ENCODE measurements at regions of chrX and their contacts with region 1.

Region 1: DNA sequence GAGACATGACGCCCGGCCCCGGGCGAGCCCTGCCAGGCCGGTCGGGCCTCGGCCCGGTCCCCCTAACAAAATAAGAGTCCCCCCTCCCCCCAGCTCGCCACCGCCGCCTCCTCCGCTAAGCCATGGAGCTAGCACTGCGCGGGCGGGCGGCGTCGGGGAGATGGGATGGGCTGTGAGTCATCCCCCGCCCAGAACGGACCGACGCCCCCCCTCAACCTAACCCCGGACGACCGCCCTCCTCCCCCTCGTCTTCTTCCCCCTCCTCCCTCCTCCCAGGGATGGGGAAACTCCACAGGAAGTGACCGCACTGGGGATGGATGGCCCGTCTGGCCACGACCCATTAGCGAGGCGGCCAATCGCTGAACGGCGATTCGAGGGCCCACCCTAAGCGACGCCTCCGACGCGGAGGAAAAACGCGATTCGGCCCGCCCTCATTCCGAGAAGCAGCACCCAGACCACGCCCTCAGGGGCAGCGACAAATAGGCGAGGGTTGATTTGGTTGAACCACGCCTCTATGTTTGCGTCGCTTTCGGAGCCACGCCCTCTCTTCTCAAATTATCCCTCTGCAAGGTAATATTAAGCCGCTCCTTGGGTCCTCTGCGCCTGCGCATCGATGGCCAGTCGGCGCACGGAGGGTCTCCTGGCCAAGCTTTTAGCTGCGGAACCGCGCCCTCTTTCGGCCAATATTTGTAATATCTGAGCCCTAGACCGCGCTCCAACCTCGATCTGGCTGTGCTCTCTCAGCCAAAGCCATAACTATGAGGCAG is at the start of gene TFE3:
- DNase-seq: peak; percentile 98
- H3K4me3 Mint-ChIP-seq: peak within 1 kb of the TSS; percentile 79
- H3K27ac Mint-ChIP-seq: peak within 1 kb of the TSS; percentile 91
- H3K4me1 Mint-ChIP-seq: peaks cover 8% of the 10 kb centered on the region
- H3K27me3 Mint-ChIP-seq: no peaks in the 10 kb centered on the region
- CTCF ChIP-seq: peak; percentile 37
- total RNA-seq, gene TFE3: 45.3 and 71.7 TPM in 2 replicates

Region 2: GRCh38 chrX:48917139-48918001 is 126.0 kb before region 1 on chrX:
- CTCF ChIA-PET with region 1: interaction called, 4 read pairs
- POLR2A ChIA-PET with region 1: interaction called, 3 read pairs
- intact Hi-C with region 1: loop called (anchors 5 kb)
- DNase-seq: peak; percentile 88
- H3K4me3 Mint-ChIP-seq: peak overlapping the region; percentile 94
- H3K27ac Mint-ChIP-seq: peak overlapping the region; percentile 96
- H3K4me1 Mint-ChIP-seq: peaks cover 18% of the 10 kb centered on the region
- H3K27me3 Mint-ChIP-seq: no peaks in the 10 kb centered on the region
- CTCF ChIP-seq: peak; percentile 75

Region 3: GRCh38 chrX:48972220-48973167 is 70.9 kb before region 1 on chrX:
- CTCF ChIA-PET with region 1: interaction called, 4 read pairs
- POLR2A ChIA-PET with region 1: interaction called, 4 read pairs
- intact Hi-C with region 1: loop called (anchors 5 kb)
- DNase-seq: peak; percentile 37
- H3K4me3 Mint-ChIP-seq: no peak overlapping the region
- H3K27ac Mint-ChIP-seq: no peak overlapping the region
- H3K4me1 Mint-ChIP-seq: no peaks in the 10 kb centered on the region
- H3K27me3 Mint-ChIP-seq: no peaks in the 10 kb centered on the region
- CTCF ChIP-seq: peak; percentile 22

Region 4: GRCh38 chrX:49058794-49059193 is 15.4 kb after region 1 on chrX and contains the start of gene CCDC120:
- CTCF ChIA-PET with region 1: interaction called, 4 read pairs
- POLR2A ChIA-PET with region 1: interaction called, 20 read pairs
- intact Hi-C with region 1: no loop called
- DNase-seq: peak; percentile 38
- H3K4me3 Mint-ChIP-seq: peak within 1 kb of the TSS; percentile 90
- H3K27ac Mint-ChIP-seq: peak within 1 kb of the TSS; percentile 59
- H3K4me1 Mint-ChIP-seq: no peaks in the 10 kb centered on the region
- H3K27me3 Mint-ChIP-seq: peaks cover 8% of the 10 kb centered on the region
- CTCF ChIP-seq: no peak
- total RNA-seq, gene CCDC120: 10.3 and 14.4 TPM in 2 replicates

Region 5: DNA sequence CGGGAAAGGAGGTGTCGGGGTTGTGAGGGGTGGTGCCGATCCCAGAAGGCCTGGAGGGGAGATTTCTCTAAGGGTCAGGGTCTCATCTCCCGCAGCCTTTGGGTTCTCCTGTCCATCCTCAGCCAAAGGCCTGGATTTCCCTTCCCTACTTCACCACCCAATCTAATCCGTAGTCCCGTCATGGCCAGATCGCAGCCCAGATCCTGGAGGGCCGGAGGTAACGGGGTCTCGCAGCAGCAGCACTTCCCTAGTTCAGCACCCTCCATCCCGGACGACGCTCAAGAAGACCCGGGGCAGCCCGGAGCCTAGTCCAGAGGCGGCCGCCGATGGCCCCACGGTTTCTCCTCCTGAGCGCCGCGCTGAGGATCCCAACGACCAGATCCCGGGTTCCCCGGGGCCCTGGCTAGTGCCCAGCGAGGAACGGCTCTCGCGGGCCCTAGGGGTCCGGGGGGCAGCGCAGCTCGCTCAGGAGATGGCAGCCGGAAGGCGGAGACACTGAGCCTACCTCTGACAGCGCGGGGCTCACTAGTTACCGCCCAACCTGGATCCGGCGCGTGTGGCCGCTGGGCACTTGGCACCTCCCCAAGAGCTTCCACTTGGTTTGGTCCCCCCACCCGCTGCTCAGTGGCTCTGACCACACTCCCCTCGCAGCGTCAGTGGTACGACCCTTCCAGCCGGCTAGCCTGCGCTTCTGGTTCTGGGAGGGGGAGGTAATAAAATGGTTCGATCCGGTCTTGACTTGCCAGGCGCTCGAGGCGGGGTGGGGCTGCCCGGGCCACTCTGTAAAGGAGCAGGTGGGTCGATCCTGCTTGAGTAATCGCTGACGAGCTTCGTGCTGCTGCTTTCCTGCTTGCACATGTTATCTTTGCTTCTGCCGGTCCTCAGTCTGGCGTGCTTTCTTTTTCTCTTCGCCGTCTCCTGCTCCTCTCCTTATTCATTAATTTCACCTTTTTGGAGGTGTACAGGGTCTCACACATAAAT is 122.8 kb after region 1 on chrX:
- CTCF ChIA-PET with region 1: no interaction called
- POLR2A ChIA-PET with region 1: interaction called, 16 read pairs
- intact Hi-C with region 1: no loop called
- DNase-seq: peak; percentile 88
- H3K4me3 Mint-ChIP-seq: peak overlapping the region; percentile 91
- H3K27ac Mint-ChIP-seq: peak overlapping the region; percentile 97
- H3K4me1 Mint-ChIP-seq: peaks cover 13% of the 10 kb centered on the region
- H3K27me3 Mint-ChIP-seq: no peaks in the 10 kb centered on the region
- CTCF ChIP-seq: peak; percentile 21

Region 6: GRCh38 chrX:49199906-49200771 is 156.7 kb after region 1 on chrX and contains the start of gene SYP:
- CTCF ChIA-PET with region 1: no interaction called
- POLR2A ChIA-PET with region 1: no interaction called
- intact Hi-C with region 1: no loop called
- DNase-seq: peak; percentile 80
- H3K4me3 Mint-ChIP-seq: peak within 1 kb of the TSS; percentile 39
- H3K27ac Mint-ChIP-seq: no peak within 1 kb of the TSS
- H3K4me1 Mint-ChIP-seq: no peaks in the 10 kb centered on the region
- H3K27me3 Mint-ChIP-seq: peaks cover 15% of the 10 kb centered on the region
- CTCF ChIP-seq: no peak
- total RNA-seq, gene SYP: 0.75 and 0.79 TPM in 2 replicates